ENCODE measurements at regions of chr2 and their contacts with region 1.

Region 1: DNA sequence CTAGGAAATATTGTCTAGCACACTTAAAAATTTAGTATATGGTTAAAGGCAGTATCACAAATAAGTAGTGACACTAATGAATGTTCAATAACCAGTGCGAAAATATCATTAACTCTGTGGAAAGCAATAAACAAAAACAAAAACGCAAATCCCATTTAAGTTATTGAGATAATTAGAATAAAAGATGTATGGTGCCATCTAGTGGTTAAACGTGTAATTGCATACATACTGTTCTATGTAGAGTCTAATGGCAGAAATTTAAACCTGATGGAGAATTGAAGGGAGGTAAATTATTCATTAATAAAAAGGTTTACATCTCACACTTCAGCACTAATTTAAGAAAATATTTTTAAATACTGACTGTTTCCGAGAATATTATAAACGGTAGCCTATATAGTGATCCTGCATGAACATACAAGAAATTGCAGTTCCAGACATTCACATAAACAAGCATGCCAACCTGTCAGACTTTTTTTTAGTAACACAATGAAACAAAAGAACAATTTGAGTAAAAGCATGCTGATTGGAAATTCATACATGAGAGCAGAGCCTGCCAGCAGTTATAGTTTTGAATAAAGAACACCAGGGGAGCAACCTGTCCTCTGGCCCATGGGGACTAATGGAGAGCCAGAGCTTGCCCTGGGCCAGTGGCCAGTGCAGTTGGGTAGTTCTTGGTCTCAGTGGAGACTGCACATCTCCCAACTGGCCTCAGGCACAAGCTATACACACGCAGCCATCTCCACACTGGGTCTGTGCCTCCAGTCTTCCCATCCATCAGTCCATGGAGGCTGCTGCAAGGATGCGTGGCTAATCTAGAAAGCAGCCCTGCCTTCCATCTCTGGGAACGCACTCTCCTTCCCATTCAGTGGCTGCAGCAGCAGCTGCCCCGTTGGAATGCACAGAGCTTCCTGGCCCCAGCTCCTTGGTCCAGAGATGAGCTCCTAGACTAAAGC is 28.0 kb downstream of the GCG start:
- DNase-seq: no peak
- ATAC-seq: peak; percentile 81

Region 2: GRCh38 chr2:161586517-161587167 is 537.4 kb before region 1 on chr2:
- intact Hi-C with region 1: loop called (anchors 10 kb)
- DNase-seq: no peak
- ATAC-seq: no peak

Region 3: GRCh38 chr2:162007447-162008040 is 116.5 kb before region 1 on chr2:
- intact Hi-C with region 1: loop called (anchors 2 kb)
- DNase-seq: no peak
- ATAC-seq: no peak

Region 4: DNA sequence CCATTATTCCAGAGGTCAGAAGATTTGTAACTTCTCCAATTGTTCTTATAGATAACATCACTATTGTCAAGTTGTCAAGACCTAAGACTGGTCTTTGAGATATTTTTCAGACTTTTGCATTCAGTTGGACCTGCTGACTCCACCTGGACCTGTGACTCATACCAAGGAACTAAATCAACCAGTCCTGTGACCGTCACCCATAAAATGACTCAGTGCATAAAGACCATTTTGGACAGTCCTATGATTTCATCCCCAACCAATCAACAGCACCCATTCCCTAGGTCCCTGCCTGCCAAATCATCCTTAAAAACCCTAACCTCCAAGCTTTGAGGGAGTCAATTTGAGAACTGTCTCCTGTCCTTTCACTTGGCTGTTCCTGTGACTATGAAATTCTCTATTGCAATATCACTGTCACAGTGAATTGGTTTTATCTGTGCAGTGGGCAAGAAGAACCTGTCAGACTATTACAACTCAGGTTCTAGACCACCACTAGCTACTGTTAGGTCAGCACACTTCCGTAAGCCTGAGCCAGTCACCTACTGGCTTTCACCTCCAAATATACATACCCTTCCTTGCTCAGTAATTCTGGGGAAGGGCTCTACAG is 67.2 kb before region 1 on chr2:
- intact Hi-C with region 1: no loop called
- DNase-seq: no peak
- ATAC-seq: no peak